CD4-positive, alpha-beta memory T cell (primary cell): ENCODE measurements at regions of chr6 and their contacts with region 1.

Region 1: GRCh38 chr6:122530440-122531046 is 58.9 kb upstream of the SERINC1 start:
- DNase-seq: peak; percentile 57 to 70 (median 69)
- H3K4me3 ChIP-seq: no peak overlapping the region
- H3K4me3 Mint-ChIP-seq: no peak overlapping the region
- H3K27ac ChIP-seq: no peak overlapping the region
- H3K27ac Mint-ChIP-seq: no peak overlapping the region
- H3K4me1 ChIP-seq: no peaks in the 10 kb centered on the region
- H3K4me1 Mint-ChIP-seq: peaks cover 0 to 3% (median 1%) of the 10 kb centered on the region in 4 donors
- H3K27me3 ChIP-seq: peaks cover 2% of the 10 kb centered on the region
- H3K27me3 Mint-ChIP-seq: peaks cover 23 to 24% of the 10 kb centered on the region in 2 donors

Region 2: GRCh38 chr6:121055572-121056163 is 1474.9 kb before region 1 on chr6:
- CTCF ChIA-PET with region 1: interaction called, 25 read pairs
- POLR2A ChIA-PET with region 1: no interaction called
- intact Hi-C with region 1: no loop called
- DNase-seq: peak in 4 of 5 donors; percentile 13 to 28 (median 20)
- H3K4me3 ChIP-seq: no peak overlapping the region
- H3K4me3 Mint-ChIP-seq: no peak overlapping the region
- H3K27ac ChIP-seq: no peak overlapping the region
- H3K27ac Mint-ChIP-seq: no peak overlapping the region
- H3K4me1 ChIP-seq: no peaks in the 10 kb centered on the region
- H3K4me1 Mint-ChIP-seq: peaks cover 0 to 4% (median under 1%) of the 10 kb centered on the region in 4 donors
- H3K27me3 ChIP-seq: no peaks in the 10 kb centered on the region
- H3K27me3 Mint-ChIP-seq: no peaks in the 10 kb centered on the region

Region 3: GRCh38 chr6:122381497-122382265 is 148.9 kb before region 1 on chr6:
- CTCF ChIA-PET with region 1: interaction called, 151 read pairs
- POLR2A ChIA-PET with region 1: interaction called, 4 read pairs
- intact Hi-C with region 1: loop called (anchors 1 kb)
- DNase-seq: peak; percentile 65 to 70 (median 68)
- H3K4me3 ChIP-seq: no peak overlapping the region
- H3K4me3 Mint-ChIP-seq: no peak overlapping the region
- H3K27ac ChIP-seq: no peak overlapping the region
- H3K27ac Mint-ChIP-seq: peak overlapping the region in 1 of 7 donors; percentile 48
- H3K4me1 ChIP-seq: no peaks in the 10 kb centered on the region
- H3K4me1 Mint-ChIP-seq: peaks cover under 1 to 4% (median 3%) of the 10 kb centered on the region in 4 donors
- H3K27me3 ChIP-seq: no peaks in the 10 kb centered on the region
- H3K27me3 Mint-ChIP-seq: peaks cover 3% of the 10 kb centered on the region in 2 donors

Region 4: GRCh38 chr6:122491919-122492555 is 38.5 kb before region 1 on chr6:
- CTCF ChIA-PET with region 1: interaction called, 117 read pairs
- POLR2A ChIA-PET with region 1: no interaction called
- intact Hi-C with region 1: loop called (anchors 1 kb)
- DNase-seq: peak; percentile 55 to 66 (median 60)
- H3K4me3 ChIP-seq: no peak overlapping the region
- H3K4me3 Mint-ChIP-seq: no peak overlapping the region
- H3K27ac ChIP-seq: no peak overlapping the region
- H3K27ac Mint-ChIP-seq: no peak overlapping the region
- H3K4me1 ChIP-seq: no peaks in the 10 kb centered on the region
- H3K4me1 Mint-ChIP-seq: peaks cover 0 to 6% (median 3%) of the 10 kb centered on the region in 4 donors
- H3K27me3 ChIP-seq: no peaks in the 10 kb centered on the region
- H3K27me3 Mint-ChIP-seq: peaks cover 2% of the 10 kb centered on the region in 2 donors

Region 5: DNA sequence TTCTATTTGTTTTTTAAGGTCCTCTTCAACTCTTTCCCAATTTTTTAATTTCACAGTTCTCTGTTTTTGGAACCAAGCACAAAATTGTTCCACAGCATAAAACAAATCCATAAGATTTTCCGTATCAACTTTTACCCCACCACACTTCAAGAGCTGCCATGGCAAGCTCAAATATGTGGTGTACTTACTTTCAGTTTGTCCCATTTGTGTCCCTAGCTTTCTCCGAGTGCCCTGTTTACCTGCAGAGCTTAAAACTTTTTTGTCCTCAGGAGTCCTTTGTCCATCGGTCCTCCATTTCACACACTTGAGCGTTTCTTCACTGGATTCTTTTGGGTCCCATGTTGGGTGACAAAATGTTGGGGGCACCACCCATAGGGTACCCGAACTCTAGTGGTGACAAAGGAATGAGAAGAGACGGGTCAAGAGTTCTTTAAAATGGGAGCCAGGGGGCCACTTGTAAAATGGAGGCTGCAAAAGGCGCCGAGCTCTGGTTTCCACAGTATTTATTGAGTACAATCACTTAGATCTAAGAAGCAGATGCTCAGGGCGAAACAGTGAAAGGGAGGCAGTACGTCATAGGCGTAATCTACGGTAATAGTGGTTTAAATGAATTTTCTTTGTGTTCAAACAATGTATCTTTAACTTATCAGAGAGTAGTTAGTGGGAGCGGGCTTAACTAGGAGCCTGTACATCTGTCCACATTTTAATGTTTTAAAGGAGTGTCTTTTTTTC is 19.2 kb before region 1 on chr6:
- CTCF ChIA-PET with region 1: interaction called, 10 read pairs
- POLR2A ChIA-PET with region 1: no interaction called
- intact Hi-C with region 1: no loop called
- DNase-seq: no peak
- H3K4me3 ChIP-seq: no peak overlapping the region
- H3K4me3 Mint-ChIP-seq: no peak overlapping the region
- H3K27ac ChIP-seq: no peak overlapping the region
- H3K27ac Mint-ChIP-seq: no peak overlapping the region
- H3K4me1 ChIP-seq: no peaks in the 10 kb centered on the region
- H3K4me1 Mint-ChIP-seq: no peaks in the 10 kb centered on the region
- H3K27me3 ChIP-seq: no peaks in the 10 kb centered on the region
- H3K27me3 Mint-ChIP-seq: peaks cover 3 to 13% of the 10 kb centered on the region in 2 donors

Region 6: GRCh38 chr6:122520179-122520578 is 10.4 kb before region 1 on chr6:
- CTCF ChIA-PET with region 1: interaction called, 37 read pairs
- POLR2A ChIA-PET with region 1: no interaction called
- intact Hi-C with region 1: no loop called
- DNase-seq: no peak
- H3K4me3 ChIP-seq: no peak overlapping the region
- H3K4me3 Mint-ChIP-seq: no peak overlapping the region
- H3K27ac ChIP-seq: no peak overlapping the region
- H3K27ac Mint-ChIP-seq: no peak overlapping the region
- H3K4me1 ChIP-seq: no peaks in the 10 kb centered on the region
- H3K4me1 Mint-ChIP-seq: no peaks in the 10 kb centered on the region
- H3K27me3 ChIP-seq: no peaks in the 10 kb centered on the region
- H3K27me3 Mint-ChIP-seq: peaks cover 11 to 18% of the 10 kb centered on the region in 2 donors

Region 7: DNA sequence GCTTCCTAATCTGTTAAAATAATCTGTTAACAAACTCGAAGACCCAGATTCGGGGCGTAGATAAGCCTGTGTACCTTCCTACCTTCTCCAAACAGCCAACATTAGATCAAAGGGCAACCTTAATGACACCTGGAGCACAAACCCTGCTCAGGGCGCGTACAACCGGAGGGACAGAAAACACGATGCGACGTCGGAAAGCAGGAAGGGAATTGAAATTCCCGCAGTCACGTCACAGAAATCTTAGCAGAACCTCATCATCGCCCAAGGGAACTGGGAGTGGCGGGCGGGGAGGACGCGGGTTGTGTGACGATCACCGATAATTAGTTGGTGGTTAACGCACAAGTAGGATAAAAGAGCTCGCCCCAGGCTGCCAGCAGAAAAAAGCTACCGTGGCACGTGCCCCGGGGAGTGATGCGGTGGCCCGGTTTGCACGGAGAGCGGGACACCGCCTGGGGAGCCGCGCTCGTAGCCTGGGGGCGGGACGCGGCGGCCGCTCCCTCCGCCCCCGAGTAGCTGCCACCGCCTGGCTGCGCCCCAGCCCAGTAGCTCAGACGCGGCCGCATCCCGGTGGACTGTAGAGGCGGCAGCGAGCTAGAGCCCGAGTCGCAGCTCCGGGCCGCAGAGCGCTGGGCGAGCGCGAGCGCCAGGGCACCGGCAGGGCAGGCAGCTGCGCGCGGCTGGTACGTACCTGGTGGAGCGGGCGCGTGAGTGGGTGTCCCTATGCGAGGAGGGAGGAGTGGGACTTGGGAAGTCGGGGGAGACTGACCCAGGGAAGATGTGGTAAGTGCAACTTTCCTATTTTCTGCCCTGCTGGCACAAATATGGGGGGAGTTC is 79.5 kb after region 1 on chr6 and contains the start of gene PKIB:
- CTCF ChIA-PET with region 1: no interaction called
- POLR2A ChIA-PET with region 1: no interaction called
- intact Hi-C with region 1: no loop called
- DNase-seq: peak; percentile 23 to 41 (median 28)
- H3K4me3 ChIP-seq: peak within 1 kb of the TSS; percentile 47 to 60
- H3K4me3 Mint-ChIP-seq: peak within 1 kb of the TSS; percentile 84 to 96 (median 90)
- H3K27ac ChIP-seq: no peak within 1 kb of the TSS
- H3K27ac Mint-ChIP-seq: peak within 1 kb of the TSS in 5 of 7 donors; percentile 5 to 88 (median 39)
- H3K4me1 ChIP-seq: peaks cover 22% of the 10 kb centered on the region
- H3K4me1 Mint-ChIP-seq: peaks cover 10 to 22% (median 13%) of the 10 kb centered on the region in 4 donors
- H3K27me3 ChIP-seq: peaks cover 14% of the 10 kb centered on the region
- H3K27me3 Mint-ChIP-seq: peaks cover 18 to 32% of the 10 kb centered on the region in 2 donors
- total RNA-seq, gene PKIB: 0.67 to 0.89 TPM

Region 8: DNA sequence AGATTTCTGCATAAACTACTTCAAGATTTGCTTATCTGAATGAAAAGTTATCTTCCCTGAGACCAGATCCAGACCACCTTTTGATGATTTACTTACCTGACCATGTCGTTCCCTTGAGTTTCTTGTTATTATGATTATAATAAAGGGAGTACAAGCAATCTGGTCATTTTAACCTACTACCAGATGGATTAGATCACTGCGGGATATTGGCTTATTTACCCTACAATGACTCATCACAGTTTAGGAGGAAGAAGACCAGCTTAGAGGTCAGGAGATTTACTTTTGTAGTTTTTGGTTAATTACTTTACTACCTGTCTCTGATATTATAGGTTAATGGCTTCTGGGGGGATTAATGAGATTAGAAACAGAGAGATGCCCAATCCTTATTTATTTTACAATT is 90.3 kb after region 1 on chr6:
- CTCF ChIA-PET with region 1: no interaction called
- POLR2A ChIA-PET with region 1: no interaction called
- intact Hi-C with region 1: no loop called
- DNase-seq: no peak
- H3K4me3 ChIP-seq: no peak overlapping the region
- H3K4me3 Mint-ChIP-seq: no peak overlapping the region
- H3K27ac ChIP-seq: no peak overlapping the region
- H3K27ac Mint-ChIP-seq: no peak overlapping the region
- H3K4me1 ChIP-seq: no peaks in the 10 kb centered on the region
- H3K4me1 Mint-ChIP-seq: no peaks in the 10 kb centered on the region
- H3K27me3 ChIP-seq: no peaks in the 10 kb centered on the region
- H3K27me3 Mint-ChIP-seq: peaks cover 10 to 11% of the 10 kb centered on the region in 2 donors